Ascending aorta (tissue), 2 donors: ENCODE measurements at regions of chrX and their contacts with region 1.

Region 1: GRCh38 chrX:17374619-17375366 is at the start of gene NHS:
- DNase-seq: peak in 1 of 2 donors; percentile 83
- H3K4me3 ChIP-seq: peak within 1 kb of the TSS; percentile 64 to 76
- H3K27ac ChIP-seq: peak within 1 kb of the TSS; percentile 31 to 72
- H3K4me1 ChIP-seq: no peaks in the 10 kb centered on the region
- H3K27me3 ChIP-seq: no peaks in the 10 kb centered on the region
- CTCF ChIP-seq: peak; percentile 9 to 58 (median 33)
- total RNA-seq, gene NHS: 8.8 TPM

Region 2: DNA sequence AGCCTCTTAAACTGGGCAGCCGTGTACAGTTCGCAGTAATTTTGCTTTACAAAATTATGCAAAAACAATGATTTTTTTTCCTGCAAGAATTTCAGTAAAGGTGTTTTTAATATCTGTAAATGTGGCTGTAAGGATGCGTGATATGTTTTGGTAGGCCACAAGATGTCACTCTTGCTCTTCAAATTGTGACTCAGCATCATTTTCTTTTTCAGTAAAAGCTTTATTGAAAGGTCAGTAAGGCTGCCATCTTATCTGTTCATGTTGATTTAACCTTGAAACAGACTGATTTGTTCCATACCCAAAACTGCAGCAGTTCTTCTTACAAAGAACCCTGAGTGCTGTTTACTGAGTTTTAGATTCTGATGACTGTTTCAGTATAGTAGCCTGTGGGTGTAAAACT is 548.6 kb before region 1 on chrX:
- intact Hi-C with region 1: loop called (anchors 5 kb)
- DNase-seq: no peak
- H3K4me3 ChIP-seq: no peak overlapping the region
- H3K27ac ChIP-seq: peak overlapping the region in 1 of 2 donors; percentile 61
- H3K4me1 ChIP-seq: peaks cover 0 to 3% of the 10 kb centered on the region in 2 donors
- H3K27me3 ChIP-seq: no peaks in the 10 kb centered on the region
- CTCF ChIP-seq: peak; percentile 24 to 59 (median 33)

Region 3: GRCh38 chrX:17413228-17413627 is 38.4 kb after region 1 on chrX:
- intact Hi-C with region 1: loop called (anchors 2 kb)
- DNase-seq: no peak
- H3K4me3 ChIP-seq: no peak overlapping the region
- H3K27ac ChIP-seq: no peak overlapping the region
- H3K4me1 ChIP-seq: peaks cover 0 to 4% of the 10 kb centered on the region in 2 donors
- H3K27me3 ChIP-seq: no peaks in the 10 kb centered on the region
- CTCF ChIP-seq: no peak

Region 4: DNA sequence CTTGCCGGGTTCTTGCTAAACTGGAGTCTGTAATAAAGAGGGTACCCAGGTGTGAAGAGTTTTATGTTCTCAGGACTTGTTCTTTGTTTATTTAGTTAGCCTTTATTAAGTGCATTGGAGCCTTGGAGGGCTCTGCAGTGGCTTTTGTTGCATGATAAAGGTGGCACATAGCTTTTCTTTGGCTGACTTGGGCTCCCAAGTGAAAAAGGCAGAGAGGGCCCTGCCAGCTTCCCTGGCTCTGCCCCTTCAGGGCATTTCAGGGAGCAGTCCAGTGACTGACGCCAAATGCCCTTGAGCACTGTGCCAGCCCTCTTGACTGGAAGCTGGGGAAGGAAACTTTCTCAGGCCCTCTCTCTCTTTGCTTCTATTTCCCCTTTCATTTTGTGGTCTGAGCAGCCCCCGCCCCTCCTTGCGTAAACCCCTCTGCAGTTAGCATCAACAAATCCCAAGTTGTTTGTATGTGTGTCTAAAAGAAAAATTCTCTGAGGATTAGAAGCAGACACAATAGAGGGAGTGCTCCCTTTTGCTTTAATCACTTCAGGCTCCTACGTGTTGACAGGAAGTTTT is 152.4 kb after region 1 on chrX:
- intact Hi-C with region 1: loop called (anchors 5 kb)
- DNase-seq: peak in 1 of 2 donors; percentile 9
- H3K4me3 ChIP-seq: peak overlapping the region in 1 of 2 donors; percentile 1
- H3K27ac ChIP-seq: peak overlapping the region in 1 of 2 donors; percentile 24
- H3K4me1 ChIP-seq: peaks cover 2 to 22% of the 10 kb centered on the region in 2 donors
- H3K27me3 ChIP-seq: no peaks in the 10 kb centered on the region
- CTCF ChIP-seq: no peak

Region 5: DNA sequence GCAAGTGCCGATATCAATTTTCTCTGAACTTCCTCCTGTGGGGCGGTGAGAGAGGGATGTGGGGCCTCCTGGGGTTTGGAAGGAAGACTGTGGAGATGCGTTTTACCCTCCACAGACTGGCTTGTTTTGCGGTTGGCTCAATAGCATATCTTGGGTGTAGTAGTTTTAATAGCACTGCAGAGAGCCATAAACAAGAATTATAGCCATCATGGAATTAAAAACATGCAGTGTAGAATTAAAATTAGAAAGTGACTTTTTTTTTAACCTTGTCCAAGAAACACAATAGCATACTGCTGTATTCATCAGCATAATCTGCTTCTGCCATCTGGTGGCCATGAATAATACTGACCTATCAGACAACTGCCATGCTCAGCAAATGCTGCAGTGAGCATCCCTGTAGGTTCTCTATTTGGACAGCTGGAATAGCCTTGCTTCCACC is 315.2 kb after region 1 on chrX:
- intact Hi-C with region 1: loop called (anchors 1 kb)
- DNase-seq: no peak
- H3K4me3 ChIP-seq: no peak overlapping the region
- H3K27ac ChIP-seq: peak overlapping the region in 1 of 2 donors; percentile 59
- H3K4me1 ChIP-seq: peaks cover 0 to 8% of the 10 kb centered on the region in 2 donors
- H3K27me3 ChIP-seq: no peaks in the 10 kb centered on the region
- CTCF ChIP-seq: peak; percentile 54 to 75 (median 56)